Activated naive CD4-positive, alpha-beta T cell treated with anti-CD3 and anti-CD28 coated beads for 36 hours (primary cell): ENCODE measurements at regions of chr6 and their contacts with region 1.

Region 1: DNA sequence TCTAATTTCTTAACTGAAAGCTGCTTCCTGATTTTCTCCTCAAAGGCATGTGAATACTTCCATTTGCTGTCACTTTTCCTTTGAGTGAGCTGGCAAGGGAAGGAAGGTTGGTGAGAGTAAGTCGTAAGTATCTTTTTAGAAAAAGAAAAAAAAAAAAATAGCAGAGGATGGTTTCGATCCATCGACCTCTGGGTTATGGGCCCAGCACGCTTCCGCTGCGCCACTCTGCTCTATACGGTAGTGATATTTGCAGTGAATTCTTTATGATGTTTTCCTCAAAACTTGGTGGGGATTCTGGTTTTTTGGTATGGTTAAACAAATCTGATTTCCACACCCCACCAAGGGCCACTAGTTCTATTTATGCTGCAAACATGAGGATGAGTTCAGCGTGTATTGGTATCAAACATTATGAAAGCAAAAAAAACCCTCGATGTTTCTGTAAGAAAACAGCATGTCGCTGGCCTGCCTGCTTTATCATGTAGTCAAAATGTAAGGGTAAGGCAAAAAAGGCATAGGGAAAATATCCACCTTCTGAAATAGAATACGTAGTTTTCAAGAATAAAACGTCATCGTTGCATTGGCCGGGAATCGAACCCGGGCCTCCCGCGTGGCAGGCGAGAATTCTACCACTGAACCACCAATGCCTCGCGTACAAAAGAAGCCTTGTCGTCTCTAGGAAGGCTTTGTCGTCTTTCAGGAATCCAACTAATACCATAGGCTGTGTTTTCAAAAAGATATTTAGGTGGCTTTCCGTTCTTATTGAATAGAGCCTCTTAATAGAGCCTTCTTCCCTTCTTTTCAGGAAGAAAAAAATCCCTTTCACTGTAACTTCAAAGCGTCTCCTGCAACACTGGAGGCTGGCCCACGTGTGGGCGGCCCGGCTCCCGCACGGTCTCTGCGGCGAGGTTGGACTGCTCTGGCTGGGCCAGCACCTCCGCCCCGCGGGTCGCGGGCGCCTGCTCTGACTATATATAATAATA is 9.6 kb downstream of the OR2B2 start:
- DNase-seq: peak; percentile 95
- H3K4me3 Mint-ChIP-seq: peak overlapping the region; percentile 81
- H3K27ac Mint-ChIP-seq: peak overlapping the region; percentile 94
- H3K4me1 Mint-ChIP-seq: peaks cover 6% of the 10 kb centered on the region
- H3K27me3 Mint-ChIP-seq: peaks cover 5% of the 10 kb centered on the region

Region 2: DNA sequence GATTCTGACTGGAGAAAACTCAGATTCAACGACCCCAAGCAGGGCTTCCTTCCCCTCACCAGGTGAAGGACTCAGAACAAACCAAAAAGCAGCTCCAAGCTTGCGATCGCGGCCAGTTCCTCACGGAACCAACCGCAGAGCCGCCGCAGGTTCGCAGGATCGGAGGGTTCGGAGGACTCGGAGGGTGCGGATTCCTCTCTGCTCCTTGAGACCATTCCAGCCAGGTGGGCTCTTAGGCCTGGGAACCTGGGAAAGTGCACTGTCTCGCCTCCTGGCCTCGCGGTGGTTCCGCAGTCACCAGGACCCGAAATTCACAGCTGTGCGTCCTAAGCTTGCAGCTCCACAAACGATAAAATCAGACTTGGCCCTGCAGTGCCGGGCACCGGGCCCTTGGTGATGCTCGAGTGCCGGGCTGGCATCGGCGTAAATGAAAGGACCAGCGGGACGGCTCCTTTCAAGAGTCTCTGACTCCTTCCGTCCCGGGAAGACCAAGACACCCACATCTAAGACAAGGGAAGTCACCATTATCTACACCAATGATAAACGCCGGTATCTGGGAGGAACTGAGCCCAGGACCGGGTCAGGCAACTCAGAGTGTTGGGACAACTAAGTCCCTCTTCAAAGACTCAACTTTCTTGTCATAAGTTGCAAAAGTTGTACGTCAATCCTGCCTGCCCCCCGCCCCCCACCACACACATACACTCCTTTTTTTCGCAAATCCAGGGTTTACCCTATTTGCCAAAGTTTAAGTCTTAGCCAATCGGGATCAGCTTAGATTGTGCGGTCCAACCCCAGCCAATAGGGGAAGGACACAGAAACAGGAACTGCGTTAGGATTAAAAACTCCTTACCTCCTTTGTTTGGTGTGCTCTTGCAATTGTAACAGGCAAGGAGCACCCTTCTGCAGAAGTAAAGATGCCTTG is 724.9 kb before region 1 on chr6:
- CTCF ChIA-PET with region 1: no interaction called
- intact Hi-C with region 1: loop called (anchors 5 kb)
- DNase-seq: peak; percentile 83
- H3K4me3 Mint-ChIP-seq: peak overlapping the region; percentile 92
- H3K27ac Mint-ChIP-seq: peak overlapping the region; percentile 87
- H3K4me1 Mint-ChIP-seq: peaks cover 4% of the 10 kb centered on the region
- H3K27me3 Mint-ChIP-seq: peaks cover 6% of the 10 kb centered on the region

Region 3: DNA sequence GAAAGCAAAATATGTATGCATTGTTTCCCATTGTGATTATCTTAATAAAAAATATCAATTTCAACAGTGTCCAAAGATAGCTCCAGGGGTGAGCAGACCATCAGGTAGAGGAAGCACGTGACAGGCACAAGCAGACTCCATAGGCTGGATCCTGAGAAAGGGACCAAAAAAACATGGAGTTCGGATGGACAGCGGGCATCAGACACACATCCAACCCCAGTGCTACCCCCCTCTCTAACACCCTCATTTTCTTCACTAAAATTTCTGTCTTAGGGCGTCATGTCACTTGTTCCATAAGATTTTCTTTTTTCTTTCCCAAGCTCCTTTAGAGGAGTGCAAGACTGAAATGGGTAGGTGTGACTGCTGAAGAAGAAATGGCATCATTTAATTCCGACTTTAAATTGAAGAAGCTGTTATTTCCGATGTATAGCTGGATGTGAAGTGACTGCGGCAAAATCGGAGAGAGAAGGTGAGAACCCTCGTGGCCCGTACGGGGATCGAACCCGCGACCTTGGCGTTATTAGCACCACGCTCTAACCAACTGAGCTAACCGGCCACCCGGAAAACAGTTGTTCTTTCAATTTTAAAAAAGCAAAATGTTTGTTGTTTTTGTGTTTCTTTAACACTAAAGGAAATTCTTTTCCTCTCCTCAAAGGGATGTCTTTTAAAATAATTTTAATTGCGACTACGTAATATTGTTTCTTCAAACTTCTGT is 665.4 kb before region 1 on chr6:
- CTCF ChIA-PET with region 1: no interaction called
- intact Hi-C with region 1: loop called (anchors 5 kb)
- DNase-seq: peak; percentile 75
- H3K4me3 Mint-ChIP-seq: peak overlapping the region; percentile 53
- H3K27ac Mint-ChIP-seq: peak overlapping the region; percentile 5
- H3K4me1 Mint-ChIP-seq: peaks cover 20% of the 10 kb centered on the region
- H3K27me3 Mint-ChIP-seq: peaks cover 68% of the 10 kb centered on the region

Region 4: DNA sequence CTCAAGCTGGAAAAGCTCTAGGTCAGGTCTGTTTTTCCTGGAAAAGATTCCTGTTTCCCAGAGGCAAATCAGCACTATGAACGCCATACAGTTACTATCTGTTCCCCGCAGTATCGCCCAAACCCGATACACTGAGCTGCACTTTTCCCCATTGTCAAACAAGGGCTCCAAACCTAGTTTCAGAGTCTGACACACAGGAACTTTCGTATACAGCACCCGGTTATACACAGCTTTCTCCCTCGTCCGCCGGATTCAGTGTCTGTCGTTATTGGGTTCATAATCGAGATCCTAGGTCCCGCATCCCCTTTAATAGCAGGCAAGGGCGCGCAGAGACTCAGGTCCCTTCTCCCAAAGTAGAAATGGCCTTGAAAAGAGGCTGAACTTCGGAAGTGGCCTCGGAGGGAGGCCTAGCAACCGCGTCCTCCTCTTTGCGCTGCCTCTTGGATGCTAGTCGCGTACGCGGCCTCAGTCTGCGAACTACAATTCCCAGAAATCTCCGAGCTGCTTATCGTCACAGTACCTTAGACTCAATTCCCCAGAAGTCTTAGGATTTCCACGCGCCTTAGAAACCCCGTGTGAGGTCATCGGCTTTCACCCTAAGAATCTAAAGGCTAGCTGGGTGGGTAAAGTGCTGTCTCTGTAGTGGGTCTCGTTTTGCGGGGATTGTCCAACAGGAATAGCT is 479.8 kb before region 1 on chr6:
- CTCF ChIA-PET with region 1: no interaction called
- intact Hi-C with region 1: no loop called
- DNase-seq: no peak
- H3K4me3 Mint-ChIP-seq: no peak overlapping the region
- H3K27ac Mint-ChIP-seq: no peak overlapping the region
- H3K4me1 Mint-ChIP-seq: no peaks in the 10 kb centered on the region
- H3K27me3 Mint-ChIP-seq: peaks cover 16% of the 10 kb centered on the region

Region 5: GRCh38 chr6:28090917-28091586 is 188.4 kb after region 1 on chr6:
- CTCF ChIA-PET with region 1: no interaction called
- intact Hi-C with region 1: no loop called
- DNase-seq: no peak
- H3K4me3 Mint-ChIP-seq: peak overlapping the region; percentile 44
- H3K27ac Mint-ChIP-seq: no peak overlapping the region
- H3K4me1 Mint-ChIP-seq: no peaks in the 10 kb centered on the region
- H3K27me3 Mint-ChIP-seq: peaks cover 19% of the 10 kb centered on the region

Region 6: GRCh38 chr6:28212510-28213212 is 310.0 kb after region 1 on chr6:
- CTCF ChIA-PET with region 1: no interaction called
- intact Hi-C with region 1: loop called (anchors 5 kb)
- DNase-seq: peak; percentile 86
- H3K4me3 Mint-ChIP-seq: peak overlapping the region; percentile 70
- H3K27ac Mint-ChIP-seq: peak overlapping the region; percentile 38
- H3K4me1 Mint-ChIP-seq: peaks cover 18% of the 10 kb centered on the region
- H3K27me3 Mint-ChIP-seq: peaks cover 72% of the 10 kb centered on the region

Region 7: GRCh38 chr6:28355743-28356665 is 453.4 kb after region 1 on chr6:
- CTCF ChIA-PET with region 1: no interaction called
- intact Hi-C with region 1: loop called (anchors 1 kb)
- DNase-seq: peak; percentile 79
- H3K4me3 Mint-ChIP-seq: peak overlapping the region; percentile 80
- H3K27ac Mint-ChIP-seq: peak overlapping the region; percentile 75
- H3K4me1 Mint-ChIP-seq: peaks cover 23% of the 10 kb centered on the region
- H3K27me3 Mint-ChIP-seq: no peaks in the 10 kb centered on the region

Region 8: DNA sequence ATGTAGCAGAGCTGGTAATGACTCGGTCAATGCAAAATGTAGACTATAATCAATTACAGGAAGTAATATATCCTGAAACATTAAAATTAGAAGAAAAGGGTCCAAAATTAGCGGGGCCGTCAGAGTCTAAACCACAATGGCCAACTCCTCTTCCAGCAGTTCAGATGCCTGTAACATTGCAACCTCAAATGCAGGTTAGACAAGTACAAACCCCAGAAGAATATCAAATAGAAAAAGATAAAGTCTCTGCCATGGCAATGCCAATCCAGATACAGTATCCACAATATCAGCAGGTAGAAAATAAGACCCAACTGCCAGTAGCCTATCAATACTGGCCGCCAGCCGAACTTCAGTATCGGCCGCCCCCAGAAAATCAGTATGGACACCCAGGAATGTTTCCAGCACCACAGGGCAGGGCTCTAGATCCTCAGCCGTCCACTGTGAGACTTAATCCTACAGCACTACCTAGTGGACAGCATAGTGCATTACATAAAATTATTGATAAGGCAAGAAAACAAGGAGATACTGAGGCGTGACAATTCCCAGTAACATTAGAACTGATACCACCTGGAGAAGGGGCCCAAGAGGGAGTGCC is 781.4 kb after region 1 on chr6:
- CTCF ChIA-PET with region 1: no interaction called
- intact Hi-C with region 1: loop called (anchors 5 kb)
- DNase-seq: no peak
- H3K4me3 Mint-ChIP-seq: no peak overlapping the region
- H3K27ac Mint-ChIP-seq: no peak overlapping the region
- H3K4me1 Mint-ChIP-seq: peaks cover 5% of the 10 kb centered on the region
- H3K27me3 Mint-ChIP-seq: peaks cover 73% of the 10 kb centered on the region